ENCODE measurements at regions of chr3 and their contacts with region 1.

Region 1: DNA sequence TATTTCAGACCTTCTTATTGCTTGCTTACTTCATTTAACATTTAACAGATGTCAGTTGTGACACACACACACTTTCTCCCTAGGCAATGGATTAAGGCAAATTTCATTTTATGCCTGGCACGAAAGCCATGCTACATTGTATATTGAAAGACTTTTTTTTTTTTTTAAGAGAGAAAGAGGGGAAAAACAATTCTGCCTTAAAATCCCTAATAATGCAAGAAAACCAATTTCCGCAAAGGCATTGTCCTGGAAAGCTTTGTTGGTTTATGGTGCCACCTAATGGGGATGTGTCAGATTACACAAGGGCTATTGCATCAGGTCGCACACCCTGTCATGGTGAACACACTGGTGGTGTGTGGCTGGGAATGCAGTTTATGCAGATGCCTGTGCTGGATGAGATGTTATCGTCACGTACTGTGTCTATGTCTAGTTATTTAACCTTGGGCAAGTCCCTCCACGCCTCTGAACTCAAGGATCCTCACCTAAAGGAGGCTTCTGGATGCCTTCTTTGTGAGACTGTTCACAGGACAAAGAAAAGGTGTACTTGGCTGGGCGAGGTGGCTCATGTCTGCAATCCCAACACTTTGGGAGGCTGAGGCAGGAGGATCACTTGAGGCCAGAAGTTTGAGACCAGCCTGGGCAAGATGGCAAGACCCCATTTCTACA is 37.3 kb upstream of the RFTN1 start:
- DNase-seq: peak; percentile 94
- H3K4me3 Mint-ChIP-seq: peak overlapping the region; percentile 22
- H3K27ac Mint-ChIP-seq: peak overlapping the region; percentile 77
- H3K4me1 Mint-ChIP-seq: peaks cover 17% of the 10 kb centered on the region
- H3K27me3 Mint-ChIP-seq: no peaks in the 10 kb centered on the region

Region 2: GRCh38 chr3:16048435-16049318 is 502.1 kb before region 1 on chr3:
- CTCF ChIA-PET with region 1: interaction called, 7 read pairs
- intact Hi-C with region 1: loop called (anchors 1 kb)
- DNase-seq: peak; percentile 68
- H3K4me3 Mint-ChIP-seq: no peak overlapping the region
- H3K27ac Mint-ChIP-seq: no peak overlapping the region
- H3K4me1 Mint-ChIP-seq: peaks cover 10% of the 10 kb centered on the region
- H3K27me3 Mint-ChIP-seq: no peaks in the 10 kb centered on the region

Region 3: DNA sequence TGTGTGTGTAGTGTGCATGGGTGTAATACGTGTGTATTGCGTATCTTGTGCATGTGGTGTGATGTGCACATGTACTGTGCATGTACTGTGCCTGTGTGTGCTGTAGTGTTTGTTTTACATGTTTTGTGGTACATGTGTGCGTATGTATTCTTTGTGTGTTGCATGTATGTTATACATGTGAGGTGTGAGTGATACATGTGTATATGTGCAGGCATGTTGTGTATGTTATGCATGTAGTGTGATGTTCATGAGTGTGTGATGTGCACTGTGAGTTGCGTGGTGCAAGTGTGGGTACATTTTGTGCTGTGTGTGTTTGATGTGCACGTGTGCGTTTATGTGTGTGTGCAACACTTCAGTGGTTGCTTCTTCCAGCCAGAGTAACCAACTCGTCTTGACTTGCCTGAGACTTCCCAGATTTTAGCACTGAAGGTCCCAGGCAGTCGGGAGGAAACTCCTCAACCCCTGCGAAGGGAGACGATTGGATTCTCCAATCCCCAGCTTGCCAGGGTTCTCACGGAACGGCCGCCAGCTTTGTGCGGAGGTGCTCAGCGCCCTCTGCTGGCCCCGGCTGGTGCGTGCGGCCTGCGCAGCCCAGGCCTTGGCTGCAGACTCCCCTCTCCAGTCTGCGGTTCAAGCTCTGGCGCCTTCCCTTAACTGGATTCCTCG is 372.7 kb before region 1 on chr3:
- CTCF ChIA-PET with region 1: no interaction called
- intact Hi-C with region 1: loop called (anchors 2 kb)
- DNase-seq: peak; percentile 73
- H3K4me3 Mint-ChIP-seq: no peak overlapping the region
- H3K27ac Mint-ChIP-seq: no peak overlapping the region
- H3K4me1 Mint-ChIP-seq: peaks cover 2% of the 10 kb centered on the region
- H3K27me3 Mint-ChIP-seq: peaks cover 7% of the 10 kb centered on the region

Region 4: DNA sequence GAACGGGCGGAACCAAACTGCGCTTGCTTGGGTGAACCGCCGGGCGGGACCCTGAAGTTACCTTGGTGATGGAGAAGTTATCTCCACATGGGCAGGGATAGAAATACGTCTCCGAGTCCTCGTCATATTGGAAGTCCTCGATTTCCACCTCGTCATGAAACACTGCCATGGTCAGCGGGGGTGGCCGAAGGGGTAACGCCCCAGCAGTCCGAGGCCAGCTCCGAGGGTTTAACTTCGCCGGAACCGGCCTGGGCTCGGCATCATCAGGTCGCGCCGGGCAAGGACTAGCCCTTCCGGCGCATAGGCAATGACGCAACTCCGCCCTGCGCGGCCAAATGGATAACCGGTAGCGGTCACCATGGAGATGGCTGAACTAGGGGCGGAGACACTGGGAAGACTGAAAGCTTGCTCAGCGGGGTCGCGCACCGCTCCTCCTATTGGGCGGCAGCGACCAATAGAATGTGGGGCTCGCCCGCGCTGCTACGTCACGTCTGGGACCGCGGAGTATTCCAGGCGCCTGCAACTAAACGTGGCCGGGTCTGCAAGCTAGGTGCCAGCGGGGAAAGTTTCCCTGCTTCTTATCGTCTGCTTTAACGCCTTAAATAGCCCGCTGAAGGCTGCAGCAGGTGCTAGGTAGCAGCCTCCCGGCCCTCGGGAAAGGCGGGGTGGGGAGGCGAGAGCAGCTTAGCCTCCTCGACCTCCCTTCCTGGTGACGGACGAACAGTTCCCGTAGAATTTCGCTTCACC is 285.9 kb before region 1 on chr3 and contains the starts of genes DPH3 and OXNAD1:
- CTCF ChIA-PET with region 1: interaction called, 10 read pairs
- intact Hi-C with region 1: loop called (anchors 1 kb)
- DNase-seq: peak; percentile 100
- H3K4me3 Mint-ChIP-seq: peak within 1 kb of the TSS; percentile 96
- H3K27ac Mint-ChIP-seq: peak within 1 kb of the TSS; percentile 94
- H3K4me1 Mint-ChIP-seq: peaks cover 31% of the 10 kb centered on the region
- H3K27me3 Mint-ChIP-seq: no peaks in the 10 kb centered on the region
- total RNA-seq, gene DPH3: 16.1 to 17.0 TPM
- total RNA-seq, gene OXNAD1: 32.4 to 34.2 TPM

Region 5: GRCh38 chr3:16482770-16483531 is 67.9 kb before region 1 on chr3:
- CTCF ChIA-PET with region 1: no interaction called
- intact Hi-C with region 1: loop called (anchors 2 kb)
- DNase-seq: peak; percentile 62
- H3K4me3 Mint-ChIP-seq: peak overlapping the region; percentile 3
- H3K27ac Mint-ChIP-seq: peak overlapping the region; percentile 74
- H3K4me1 Mint-ChIP-seq: peaks cover 82% of the 10 kb centered on the region
- H3K27me3 Mint-ChIP-seq: no peaks in the 10 kb centered on the region

Region 6: GRCh38 chr3:16533928-16534574 is 16.8 kb before region 1 on chr3:
- CTCF ChIA-PET with region 1: no interaction called
- intact Hi-C with region 1: no loop called
- DNase-seq: no peak
- H3K4me3 Mint-ChIP-seq: no peak overlapping the region
- H3K27ac Mint-ChIP-seq: no peak overlapping the region
- H3K4me1 Mint-ChIP-seq: peaks cover 4% of the 10 kb centered on the region
- H3K27me3 Mint-ChIP-seq: peaks cover 2% of the 10 kb centered on the region